ENCODE measurements at regions of chr3 and their contacts with region 1.

Region 1: GRCh38 chr3:27484015-27484844 is at the start of gene SLC4A7:
- DNase-seq: peak; percentile 97 to 99
- H3K4me3 ChIP-seq: peak within 1 kb of the TSS; percentile 74 to 86
- H3K27ac ChIP-seq: peak within 1 kb of the TSS; percentile 91 to 98
- H3K4me1 ChIP-seq: peaks cover 0 to 42% (median 22%) of the 10 kb centered on the region in 4 donors
- H3K27me3 ChIP-seq: no peaks in the 10 kb centered on the region
- CTCF ChIP-seq: no peak

Region 2: GRCh38 chr3:27289769-27290413 is 194.3 kb before region 1 on chr3:
- intact Hi-C with region 1: no loop called
- DNase-seq: no peak
- H3K4me3 ChIP-seq: no peak overlapping the region
- H3K27ac ChIP-seq: no peak overlapping the region
- H3K4me1 ChIP-seq: peaks cover 0 to 34% (median 10%) of the 10 kb centered on the region in 4 donors
- H3K27me3 ChIP-seq: no peaks in the 10 kb centered on the region
- CTCF ChIP-seq: no peak

Region 3: GRCh38 chr3:27360113-27361078 is 123.8 kb before region 1 on chr3:
- intact Hi-C with region 1: no loop called
- DNase-seq: no peak
- H3K4me3 ChIP-seq: no peak overlapping the region
- H3K27ac ChIP-seq: no peak overlapping the region
- H3K4me1 ChIP-seq: no peaks in the 10 kb centered on the region
- H3K27me3 ChIP-seq: no peaks in the 10 kb centered on the region
- CTCF ChIP-seq: no peak

Region 4: GRCh38 chr3:27533718-27534573 is 49.7 kb after region 1 on chr3:
- intact Hi-C with region 1: loop called (anchors 5 kb)
- DNase-seq: peak; percentile 77 to 88
- H3K4me3 ChIP-seq: no peak overlapping the region
- H3K27ac ChIP-seq: peak overlapping the region; percentile 50 to 68
- H3K4me1 ChIP-seq: peaks cover 0 to 39% (median 18%) of the 10 kb centered on the region in 4 donors
- H3K27me3 ChIP-seq: no peaks in the 10 kb centered on the region
- CTCF ChIP-seq: peak; percentile 47 to 68

Region 5: DNA sequence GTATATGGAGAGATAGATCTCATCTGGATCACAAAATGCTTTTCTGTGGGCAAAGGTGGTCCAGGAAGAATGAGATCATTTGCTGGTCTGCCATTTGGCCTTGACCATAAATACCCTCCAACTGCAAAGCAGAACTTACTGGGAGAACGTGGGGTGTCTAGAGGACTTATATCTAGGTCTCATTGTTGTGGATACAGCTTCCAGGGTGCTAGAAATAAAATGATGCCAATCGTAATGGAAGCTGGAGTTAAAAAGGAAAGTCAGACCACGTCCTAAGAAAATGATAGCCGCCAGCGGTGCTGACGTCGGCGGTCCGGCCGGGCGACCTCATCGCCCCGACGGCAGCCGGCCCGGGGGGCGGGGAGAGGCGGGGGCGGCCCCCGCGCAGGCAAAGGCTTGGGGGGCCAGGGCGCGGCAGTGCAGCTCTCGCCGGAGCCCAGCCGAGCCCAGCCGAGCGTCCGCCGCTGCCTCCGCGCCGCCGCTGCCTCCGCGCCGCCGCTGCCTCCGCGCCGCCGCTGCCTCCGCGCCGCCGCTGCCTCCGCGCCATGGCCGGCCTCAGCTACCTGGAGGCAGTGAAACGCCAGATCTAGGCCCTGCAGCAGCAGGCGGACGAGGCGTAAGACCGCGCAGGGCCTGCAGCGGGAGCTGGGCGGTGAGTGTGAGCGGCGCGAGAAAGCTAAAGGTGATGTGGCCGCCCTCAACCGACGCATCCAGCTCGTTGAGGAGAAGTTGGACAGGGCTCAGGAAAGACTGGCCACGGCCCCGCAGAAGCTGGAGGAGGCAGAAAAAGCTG is 148.4 kb after region 1 on chr3:
- intact Hi-C with region 1: loop called (anchors 10 kb)
- DNase-seq: peak; percentile 28 to 71
- H3K4me3 ChIP-seq: peak overlapping the region; percentile 53 to 65
- H3K27ac ChIP-seq: peak overlapping the region; percentile 81 to 88
- H3K4me1 ChIP-seq: peaks cover 0 to 34% (median 17%) of the 10 kb centered on the region in 4 donors
- H3K27me3 ChIP-seq: no peaks in the 10 kb centered on the region
- CTCF ChIP-seq: no peak

Measured in tibial artery (tissue), 4 donors.